Posterior vena cava (tissue), 2 donors: ENCODE measurements at regions of chr4 and their contacts with region 1.

Region 1: DNA sequence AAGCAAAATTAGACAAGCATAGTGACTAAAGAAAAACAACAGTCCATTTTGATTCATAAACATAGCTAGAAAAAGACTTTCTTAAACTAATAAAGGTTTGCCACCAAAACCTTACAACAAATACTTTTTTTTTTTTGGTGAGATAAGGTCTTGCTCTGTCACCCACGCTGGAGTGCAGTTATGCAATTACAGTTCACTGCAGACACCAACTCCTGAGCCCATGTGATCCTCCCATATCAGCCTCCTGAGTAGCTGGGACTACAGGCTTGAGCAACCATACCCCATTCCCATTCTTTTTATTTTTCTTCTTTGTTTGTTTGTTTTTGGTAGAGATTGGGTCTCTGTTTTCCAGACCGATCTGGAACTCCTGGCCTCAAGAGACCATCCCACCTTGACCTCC is 247.2 kb upstream of the ADGRL3 start:
- DNase-seq: no peak

Region 2: DNA sequence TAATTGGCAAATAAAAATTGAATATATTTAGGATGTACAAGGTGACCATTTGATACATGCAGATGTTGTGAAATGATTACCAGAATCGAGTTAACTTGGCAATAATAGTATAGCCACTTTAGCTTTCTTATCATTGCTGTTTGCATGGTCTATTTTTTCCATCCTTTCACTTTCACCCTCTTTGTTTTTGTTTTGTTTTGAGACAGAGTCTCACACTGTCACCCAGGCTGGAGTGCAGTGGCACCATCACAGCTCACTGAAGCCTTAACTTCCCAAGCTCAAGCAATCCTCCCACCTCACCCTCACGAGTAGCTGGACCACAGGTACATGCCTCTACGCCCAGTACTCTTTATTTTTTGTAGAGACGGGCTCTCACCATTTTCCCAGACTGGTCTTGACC is 28.6 kb after region 1 on chr4:
- intact Hi-C with region 1: no loop called
- DNase-seq: no peak

Region 3: DNA sequence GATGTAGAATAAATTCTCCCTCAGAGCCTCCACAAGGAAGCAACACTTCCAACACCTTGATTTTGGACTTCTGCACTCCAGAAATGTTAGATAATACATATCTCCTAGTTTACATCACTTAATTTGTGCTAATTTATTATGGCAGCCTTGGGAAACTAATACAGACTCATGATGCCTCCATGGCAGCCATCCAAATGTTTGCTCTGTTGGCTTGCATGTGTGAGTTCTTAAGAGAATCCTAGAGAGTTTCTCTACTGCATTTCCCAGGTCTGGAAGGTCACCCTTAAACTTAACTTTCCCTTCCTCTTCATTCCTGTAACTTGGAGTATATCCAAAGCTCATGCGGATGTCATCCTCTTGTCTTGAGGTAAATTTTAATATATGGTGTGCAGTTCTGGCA is 1203.3 kb after region 1 on chr4:
- intact Hi-C with region 1: loop called in 1 of 2 experiments (anchors 5 kb)
- DNase-seq: no peak